ENCODE measurements at regions of chr2 and their contacts with region 1.

Region 1: GRCh38 chr2:106547164-106547903 is 60.2 kb downstream of the CD8B2 start:
- DNase-seq: no peak
- ATAC-seq: no peak
- H3K4me3 ChIP-seq: no peak overlapping the region
- H3K4me3 Mint-ChIP-seq: no peak overlapping the region
- H3K27ac ChIP-seq: no peak overlapping the region
- H3K27ac Mint-ChIP-seq: no peak overlapping the region
- H3K4me1 ChIP-seq: peaks cover 0 to 6% of the 10 kb centered on the region in 2 experiments
- H3K4me1 Mint-ChIP-seq: peaks cover 0 to 3% (median 2%) of the 10 kb centered on the region in 3 donors
- H3K27me3 ChIP-seq: peaks cover 0 to 29% of the 10 kb centered on the region in 2 experiments
- H3K27me3 Mint-ChIP-seq: peaks cover 21 to 23% of the 10 kb centered on the region in 2 donors

Region 2: DNA sequence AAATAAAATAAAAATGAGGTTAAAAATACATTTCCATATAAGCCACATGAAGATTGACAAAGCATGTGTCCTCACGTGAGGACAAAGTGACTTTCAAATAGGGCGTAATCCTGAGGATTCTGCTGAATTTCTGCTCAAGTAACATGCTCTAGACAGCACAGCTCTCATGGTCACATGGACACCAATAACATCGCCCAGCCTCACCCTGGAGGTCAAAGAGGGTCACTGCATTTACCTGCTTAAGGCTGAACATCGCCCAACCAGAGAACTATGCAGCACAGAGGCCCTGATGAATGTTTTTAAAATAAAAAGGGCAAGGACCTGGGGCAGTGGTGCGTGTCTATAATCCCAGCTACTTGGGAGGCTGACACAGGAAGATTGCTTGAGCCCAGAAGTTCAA is 1248.0 kb before region 1 on chr2:
- CTCF ChIA-PET with region 1: interaction called in 1 of 2 experiments, 12 read pairs
- POLR2A ChIA-PET with region 1: no interaction called
- DNase-seq: no peak
- ATAC-seq: no peak
- H3K4me3 ChIP-seq: no peak overlapping the region
- H3K4me3 Mint-ChIP-seq: no peak overlapping the region
- H3K27ac ChIP-seq: no peak overlapping the region
- H3K27ac Mint-ChIP-seq: no peak overlapping the region
- H3K4me1 ChIP-seq: peaks cover 2 to 5% of the 10 kb centered on the region in 2 experiments
- H3K4me1 Mint-ChIP-seq: peaks cover 21 to 29% (median 26%) of the 10 kb centered on the region in 3 donors
- H3K27me3 ChIP-seq: no peaks in the 10 kb centered on the region
- H3K27me3 Mint-ChIP-seq: no peaks in the 10 kb centered on the region

Region 3: GRCh38 chr2:106531745-106532144 is 15.6 kb before region 1 on chr2:
- CTCF ChIA-PET with region 1: no interaction called
- POLR2A ChIA-PET with region 1: no interaction called
- DNase-seq: no peak
- ATAC-seq: no peak
- H3K4me3 ChIP-seq: no peak overlapping the region
- H3K4me3 Mint-ChIP-seq: no peak overlapping the region
- H3K27ac ChIP-seq: no peak overlapping the region
- H3K27ac Mint-ChIP-seq: no peak overlapping the region
- H3K4me1 ChIP-seq: no peaks in the 10 kb centered on the region
- H3K4me1 Mint-ChIP-seq: no peaks in the 10 kb centered on the region
- H3K27me3 ChIP-seq: peaks cover 0 to 13% of the 10 kb centered on the region in 2 experiments
- H3K27me3 Mint-ChIP-seq: peaks cover 10 to 20% of the 10 kb centered on the region in 2 donors

Region 4: GRCh38 chr2:106614511-106615291 is 67.4 kb after region 1 on chr2:
- CTCF ChIA-PET with region 1: no interaction called
- POLR2A ChIA-PET with region 1: no interaction called
- DNase-seq: no peak
- ATAC-seq: no peak
- H3K4me3 ChIP-seq: no peak overlapping the region
- H3K4me3 Mint-ChIP-seq: no peak overlapping the region
- H3K27ac ChIP-seq: no peak overlapping the region
- H3K27ac Mint-ChIP-seq: no peak overlapping the region
- H3K4me1 ChIP-seq: no peaks in the 10 kb centered on the region
- H3K4me1 Mint-ChIP-seq: no peaks in the 10 kb centered on the region
- H3K27me3 ChIP-seq: peaks cover 0 to 11% of the 10 kb centered on the region in 2 experiments
- H3K27me3 Mint-ChIP-seq: peaks cover 0 to 27% of the 10 kb centered on the region in 2 donors